OCI-LY7 (cell line): ENCODE measurements at regions of chr10 and their contacts with region 1.

Region 1: GRCh38 chr10:96719850-96720421 is 378 bp downstream of the PIK3AP1 start:
- DNase-seq: peak; percentile 94
- H3K4me3 ChIP-seq: peak overlapping the region; percentile 87
- H3K27ac ChIP-seq: peak overlapping the region; percentile 91
- H3K4me1 ChIP-seq: peaks cover 66% of the 10 kb centered on the region
- CTCF ChIP-seq: peak; percentile 86

Region 2: GRCh38 chr10:96358851-96359540 is 360.9 kb before region 1 on chr10 and contains the start of gene OPALIN:
- CTCF ChIA-PET with region 1: no interaction called
- POLR2A ChIA-PET with region 1: no interaction called
- intact Hi-C with region 1: no loop called
- DNase-seq: no peak
- H3K4me3 ChIP-seq: no peak within 1 kb of the TSS
- H3K27ac ChIP-seq: no peak within 1 kb of the TSS
- H3K4me1 ChIP-seq: no peaks in the 10 kb centered on the region
- CTCF ChIP-seq: no peak
- total RNA-seq, gene OPALIN: not detected in 2 replicates

Region 3: DNA sequence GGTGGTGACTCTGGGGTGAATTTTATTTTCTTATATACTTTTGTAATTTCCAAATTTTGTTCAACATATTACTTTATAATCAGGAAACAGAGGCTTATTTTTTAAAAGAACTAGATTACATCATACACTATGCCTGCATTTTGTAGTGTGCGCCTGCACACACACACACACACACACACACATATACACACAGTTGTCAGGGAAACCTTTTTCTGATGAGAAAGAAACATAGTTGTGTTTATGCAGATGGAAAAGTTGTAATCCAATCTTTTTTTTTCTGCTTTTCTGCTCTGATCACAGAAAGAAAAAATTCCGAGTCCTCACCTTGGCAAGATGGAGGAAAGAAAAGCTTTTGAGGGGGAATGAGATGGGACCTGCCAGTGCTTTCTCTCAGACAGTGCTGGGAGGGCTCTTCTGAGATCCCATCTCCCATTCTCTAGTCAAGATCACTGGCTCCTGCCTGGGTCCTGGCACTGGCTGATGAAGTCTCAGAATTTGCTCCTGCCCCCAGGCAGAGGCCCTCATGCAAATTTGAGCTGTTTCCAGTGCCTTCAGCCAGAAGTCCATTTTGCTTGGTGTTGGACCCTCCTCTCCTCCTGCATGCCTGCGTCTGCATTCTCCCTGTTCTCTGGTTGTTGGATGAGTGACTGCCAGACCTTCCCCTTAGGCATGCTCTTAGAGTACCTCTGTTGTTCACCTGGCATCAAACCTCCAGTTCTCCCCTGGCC is 265.9 kb before region 1 on chr10:
- CTCF ChIA-PET with region 1: no interaction called
- POLR2A ChIA-PET with region 1: no interaction called
- intact Hi-C with region 1: no loop called
- DNase-seq: no peak
- H3K4me3 ChIP-seq: no peak overlapping the region
- H3K27ac ChIP-seq: no peak overlapping the region
- H3K4me1 ChIP-seq: no peaks in the 10 kb centered on the region
- CTCF ChIP-seq: no peak

Region 4: DNA sequence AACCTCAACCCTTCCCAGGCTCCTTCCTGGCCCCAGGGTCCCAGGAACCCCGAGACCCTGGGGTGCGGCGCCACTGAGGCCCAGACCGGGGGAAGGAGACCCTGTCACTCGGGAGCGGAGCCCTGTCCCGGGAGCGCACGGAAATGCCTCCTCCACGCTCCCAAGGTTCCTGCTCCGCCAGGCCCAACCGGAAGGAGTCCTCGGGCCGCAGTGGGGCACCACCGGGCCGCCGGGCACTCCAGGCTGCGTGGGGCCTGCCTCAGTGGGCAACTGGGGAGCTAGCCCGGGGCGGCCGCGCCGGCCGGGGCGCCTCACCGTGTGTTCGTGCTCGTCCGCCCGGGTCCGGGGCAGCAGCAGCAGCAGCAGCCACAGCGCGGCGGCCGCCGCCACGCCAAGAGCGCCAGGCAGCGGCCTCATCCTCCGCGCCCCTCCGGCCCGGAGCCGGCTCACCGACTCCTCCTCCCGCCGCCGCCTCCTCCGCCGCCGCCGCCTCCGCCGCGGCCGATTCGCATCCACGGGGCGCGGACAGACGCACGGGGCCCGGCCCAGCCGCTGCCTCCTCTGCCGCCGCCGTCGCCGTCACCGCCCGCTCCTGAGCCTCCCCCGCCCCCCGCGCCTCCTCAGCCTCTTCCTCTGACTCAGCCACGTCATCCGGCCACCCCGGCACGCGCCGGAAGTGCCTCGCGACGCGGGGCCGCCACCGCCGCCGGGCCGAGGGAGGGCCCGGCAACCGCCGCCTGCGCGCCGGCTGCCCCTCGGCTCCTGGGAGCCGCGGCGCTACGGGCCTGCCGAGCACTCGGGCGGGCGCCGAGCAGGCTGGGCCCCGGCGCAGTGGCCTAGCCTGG is 133.3 kb before region 1 on chr10 and contains the start of gene TM9SF3:
- CTCF ChIA-PET with region 1: no interaction called
- POLR2A ChIA-PET with region 1: no interaction called
- intact Hi-C with region 1: loop called (anchors 5 kb)
- DNase-seq: peak; percentile 91
- H3K4me3 ChIP-seq: peak within 1 kb of the TSS; percentile 99
- H3K27ac ChIP-seq: peak within 1 kb of the TSS; percentile 88
- H3K4me1 ChIP-seq: peaks cover 42% of the 10 kb centered on the region
- CTCF ChIP-seq: no peak
- total RNA-seq, gene TM9SF3: 20.8 and 23.0 TPM in 2 replicates

Region 5: GRCh38 chr10:96673318-96674099 is 46.4 kb before region 1 on chr10:
- CTCF ChIA-PET with region 1: interaction called, 4 read pairs
- POLR2A ChIA-PET with region 1: interaction called, 11 read pairs
- intact Hi-C with region 1: loop called (anchors 1 kb)
- DNase-seq: peak; percentile 87
- H3K4me3 ChIP-seq: peak overlapping the region; percentile 62
- H3K27ac ChIP-seq: peak overlapping the region; percentile 96
- H3K4me1 ChIP-seq: peaks cover 88% of the 10 kb centered on the region
- CTCF ChIP-seq: no peak

Region 6: DNA sequence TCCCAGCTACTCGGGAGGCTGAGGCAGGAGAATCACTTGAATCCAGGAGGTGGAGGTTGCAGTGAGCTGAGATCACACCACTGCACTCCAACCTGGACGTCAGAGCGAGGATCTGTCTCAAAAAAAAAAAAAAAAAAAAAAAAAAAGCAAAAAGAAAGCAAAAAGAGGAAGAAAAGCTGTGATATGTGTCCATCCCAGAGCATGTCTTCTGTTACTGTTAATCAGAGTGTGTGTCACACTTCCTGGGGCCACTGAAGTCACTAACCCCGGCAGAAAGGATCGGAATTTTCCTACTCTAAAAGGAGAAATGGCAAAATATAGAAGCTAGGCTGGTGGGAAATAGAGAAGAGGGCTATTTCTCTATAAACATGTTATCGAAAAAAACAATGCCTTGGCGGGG is 11.5 kb before region 1 on chr10:
- CTCF ChIA-PET with region 1: interaction called, 4 read pairs
- POLR2A ChIA-PET with region 1: interaction called, 22 read pairs
- intact Hi-C with region 1: loop called (anchors 1 kb)
- DNase-seq: peak; percentile 44
- H3K4me3 ChIP-seq: no peak overlapping the region
- H3K27ac ChIP-seq: peak overlapping the region; percentile 39
- H3K4me1 ChIP-seq: peaks cover 71% of the 10 kb centered on the region
- CTCF ChIP-seq: no peak

Region 7: DNA sequence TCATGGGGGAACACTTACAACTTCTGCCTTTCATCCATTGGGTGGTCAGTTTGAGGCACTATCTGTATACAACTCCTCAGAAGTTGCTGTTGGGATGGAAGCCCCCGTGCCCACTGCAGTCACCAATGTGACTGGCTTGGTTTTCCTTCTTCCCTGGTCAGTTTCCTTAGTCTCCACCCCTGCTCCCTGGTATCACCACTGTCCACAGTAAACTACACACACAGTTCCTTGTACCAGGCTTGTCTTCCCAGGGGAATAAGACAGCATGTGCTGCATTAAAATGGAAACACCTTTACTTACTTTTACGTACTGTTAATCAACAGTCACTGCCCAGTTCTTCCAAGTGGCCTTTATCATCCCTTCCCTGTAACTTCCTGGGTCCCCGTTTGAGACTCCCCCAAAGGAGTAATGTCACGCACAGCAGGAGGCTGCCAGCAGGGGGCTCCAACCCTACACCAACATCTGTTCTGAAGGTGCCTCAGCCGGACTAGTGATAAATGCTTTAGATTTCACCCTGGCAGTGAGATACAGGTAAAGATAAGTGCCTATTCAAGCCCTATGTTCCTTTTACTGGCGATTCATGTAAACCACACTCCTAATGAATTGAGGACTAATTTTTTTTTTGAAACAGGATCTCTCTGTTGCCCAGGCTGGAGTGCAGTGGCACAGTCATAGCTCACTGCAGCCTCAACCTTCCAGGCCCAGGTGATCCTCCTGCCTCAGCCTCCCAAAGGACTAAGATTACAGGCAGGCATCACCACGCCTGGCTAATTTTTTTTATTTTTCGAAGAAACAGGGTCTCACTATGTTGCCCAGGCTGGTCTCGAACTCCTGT is 45.7 kb after region 1 on chr10:
- CTCF ChIA-PET with region 1: no interaction called
- POLR2A ChIA-PET with region 1: interaction called, 12 read pairs
- intact Hi-C with region 1: loop called (anchors 1 kb)
- DNase-seq: peak; percentile 90
- H3K4me3 ChIP-seq: peak overlapping the region; percentile 1
- H3K27ac ChIP-seq: peak overlapping the region; percentile 75
- H3K4me1 ChIP-seq: peaks cover 38% of the 10 kb centered on the region
- CTCF ChIP-seq: peak; percentile 100